Uterus (tissue), 4 donors: ENCODE measurements at regions of chr3 and their contacts with region 1.

Region 1: DNA sequence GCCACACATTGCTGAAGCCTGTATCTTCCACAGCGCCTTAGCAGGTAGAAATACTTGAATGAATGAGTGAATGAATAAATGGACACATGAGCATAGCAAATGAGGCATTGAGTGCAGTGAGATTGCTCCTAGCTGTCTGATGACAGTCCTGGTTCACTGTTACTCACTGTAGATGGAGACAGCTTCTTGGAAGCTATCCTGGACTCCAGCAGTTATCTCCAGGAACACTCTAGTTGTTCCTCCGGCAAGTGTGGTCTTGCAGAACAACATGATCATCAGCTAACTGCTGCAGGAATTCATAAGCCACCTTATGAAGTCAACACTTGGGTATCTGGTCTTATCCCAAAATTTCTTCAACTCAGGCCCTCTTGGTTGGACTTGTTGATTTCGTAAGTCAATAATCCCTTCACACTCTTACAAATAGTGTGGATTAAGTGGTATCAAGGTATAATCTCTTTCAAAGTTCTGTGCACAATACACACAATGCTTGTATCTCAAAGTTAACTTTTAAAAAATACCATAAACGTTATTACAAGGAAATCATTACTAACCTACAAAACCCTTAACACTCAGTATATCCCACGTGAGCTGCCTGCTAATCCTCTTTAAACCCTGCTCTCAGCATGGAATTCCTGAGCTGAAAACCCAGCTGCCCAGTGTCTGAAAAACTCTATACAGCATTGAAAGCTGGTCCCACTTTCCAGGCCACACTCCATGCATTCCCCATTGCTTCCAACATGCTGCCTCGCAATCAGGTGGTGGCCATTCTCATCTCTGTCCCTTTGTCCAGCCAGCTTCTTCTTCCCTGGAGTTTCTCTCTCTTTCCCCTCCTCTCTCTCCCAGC is 14.4 kb upstream of the ZBTB38 start:
- DNase-seq: no peak
- H3K4me3 ChIP-seq: no peak overlapping the region
- H3K27ac ChIP-seq: no peak overlapping the region
- H3K4me1 ChIP-seq: no peaks in the 10 kb centered on the region
- H3K27me3 ChIP-seq: no peaks in the 10 kb centered on the region
- CTCF ChIP-seq: no peak
- POLR2A ChIP-seq: no peak

Region 2: DNA sequence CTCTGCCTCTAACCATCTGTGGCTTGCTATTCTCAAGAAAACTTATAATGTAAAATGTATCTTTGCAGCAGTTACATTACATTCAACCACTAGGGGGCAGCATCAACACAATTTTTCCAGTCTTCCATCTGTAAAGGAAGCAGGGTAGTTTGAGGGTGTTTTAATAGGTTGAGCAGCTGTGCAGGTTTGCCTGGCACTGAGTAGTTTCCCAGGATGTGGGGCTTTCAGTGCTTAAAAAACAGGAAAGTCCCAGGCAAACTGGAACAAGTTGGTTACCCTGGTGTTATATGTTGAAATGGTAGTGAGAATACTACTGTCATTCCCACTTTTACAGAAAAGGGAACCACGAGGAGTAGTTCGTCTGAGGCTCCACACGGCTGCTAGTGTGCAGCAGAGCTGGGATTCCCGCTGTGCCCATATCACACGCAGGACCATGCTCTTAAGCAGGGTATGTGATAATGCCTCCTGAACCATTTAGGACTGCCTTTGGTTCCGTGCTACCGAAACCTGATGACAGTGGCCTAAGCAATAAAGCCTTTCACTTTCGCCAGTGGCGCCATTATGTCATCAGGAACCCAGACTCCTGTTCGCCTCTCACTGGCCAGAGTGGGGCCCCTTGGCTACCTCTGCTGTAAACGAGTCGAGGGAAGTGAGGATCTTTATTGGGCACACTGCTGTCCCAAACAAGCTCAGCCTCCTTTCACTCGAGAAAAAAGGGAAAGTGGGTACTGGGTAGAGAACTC is 50.2 kb before region 1 on chr3:
- intact Hi-C with region 1: loop called (anchors 10 kb)
- DNase-seq: peak in 1 of 2 donors; percentile 65
- H3K4me3 ChIP-seq: no peak overlapping the region
- H3K27ac ChIP-seq: no peak overlapping the region
- H3K4me1 ChIP-seq: no peaks in the 10 kb centered on the region
- H3K27me3 ChIP-seq: no peaks in the 10 kb centered on the region
- CTCF ChIP-seq: peak; percentile 73 to 79 (median 76)
- POLR2A ChIP-seq: no peak

Region 3: GRCh38 chr3:141544697-141545096 is 190.8 kb after region 1 on chr3:
- intact Hi-C with region 1: no loop called
- DNase-seq: no peak
- H3K4me3 ChIP-seq: no peak overlapping the region
- H3K27ac ChIP-seq: no peak overlapping the region
- H3K4me1 ChIP-seq: no peaks in the 10 kb centered on the region
- H3K27me3 ChIP-seq: no peaks in the 10 kb centered on the region
- CTCF ChIP-seq: no peak
- POLR2A ChIP-seq: no peak